ENCODE measurements at regions of chr12 and their contacts with region 1.

Region 1: DNA sequence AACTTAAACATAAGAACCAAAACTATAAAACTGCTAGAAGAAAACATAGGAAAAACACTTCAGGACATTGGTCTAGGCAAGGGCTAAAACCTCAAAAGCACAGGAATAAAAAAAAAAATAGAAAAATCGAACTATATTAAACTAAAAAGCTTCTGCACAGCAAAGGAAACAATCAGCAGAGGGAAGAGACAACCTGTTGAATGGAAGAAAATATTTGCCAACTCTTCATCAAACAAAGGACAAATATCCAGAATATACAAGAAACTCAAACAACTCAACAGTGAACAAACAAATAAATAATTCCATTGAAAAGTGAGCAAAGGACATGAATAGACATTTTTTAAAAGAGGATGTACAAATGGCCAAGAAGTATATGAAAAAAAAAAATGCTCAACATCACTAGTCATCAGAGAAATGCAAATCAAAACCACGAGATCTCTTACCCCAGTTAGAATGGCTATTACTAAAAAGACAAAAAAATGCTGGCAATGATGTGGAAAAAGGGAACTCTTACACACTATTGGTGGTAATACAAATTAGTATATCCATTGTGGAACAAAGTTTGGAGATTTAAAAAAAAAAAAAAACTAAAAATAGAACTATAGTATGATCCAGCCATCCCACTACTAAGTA is 152.0 kb downstream of the NDUFA12 start:
- DNase-seq: no peak
- H3K4me3 ChIP-seq: no peak overlapping the region
- CTCF ChIP-seq: no peak

Region 2: GRCh38 chr12:94795520-94795919 is 56.0 kb before region 1 on chr12:
- in situ Hi-C with region 1: no loop called
- DNase-seq: peak; percentile 29
- H3K4me3 ChIP-seq: no peak overlapping the region
- CTCF ChIP-seq: peak; percentile 15

Region 3: DNA sequence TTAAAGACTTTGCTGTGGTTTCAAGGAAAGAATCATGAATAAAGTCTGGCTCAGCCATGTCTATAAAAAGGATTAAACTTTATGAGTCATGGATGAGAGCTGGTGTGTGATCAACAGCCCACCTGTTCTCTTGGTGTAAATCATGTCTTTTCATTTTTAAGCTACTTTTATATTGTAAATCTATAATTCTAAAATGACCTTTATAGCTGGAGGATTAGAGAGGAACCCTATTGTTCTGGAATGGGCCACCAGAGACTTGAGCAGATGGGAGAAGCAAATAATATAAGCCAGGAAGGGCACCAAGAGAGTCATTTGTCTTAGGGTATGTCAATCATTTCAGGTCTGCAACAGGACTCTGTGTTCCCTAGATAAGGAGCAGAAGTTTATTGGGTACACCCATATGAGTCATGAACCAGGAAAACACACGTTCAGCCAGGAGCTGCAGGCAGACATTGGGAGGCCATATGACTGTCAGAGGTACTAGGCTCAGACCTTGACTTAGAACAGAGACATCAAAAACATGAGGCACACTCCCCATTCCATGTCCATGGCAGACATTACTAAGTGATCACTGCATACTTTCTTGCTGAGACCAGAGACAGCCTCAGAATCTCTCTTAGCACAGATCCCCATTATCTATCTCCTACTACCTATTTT is 102.6 kb after region 1 on chr12:
- in situ Hi-C with region 1: loop called (anchors 5 kb)
- DNase-seq: no peak
- H3K4me3 ChIP-seq: no peak overlapping the region
- CTCF ChIP-seq: no peak